ENCODE measurements at regions of chr10 and their contacts with region 1.

Region 1: DNA sequence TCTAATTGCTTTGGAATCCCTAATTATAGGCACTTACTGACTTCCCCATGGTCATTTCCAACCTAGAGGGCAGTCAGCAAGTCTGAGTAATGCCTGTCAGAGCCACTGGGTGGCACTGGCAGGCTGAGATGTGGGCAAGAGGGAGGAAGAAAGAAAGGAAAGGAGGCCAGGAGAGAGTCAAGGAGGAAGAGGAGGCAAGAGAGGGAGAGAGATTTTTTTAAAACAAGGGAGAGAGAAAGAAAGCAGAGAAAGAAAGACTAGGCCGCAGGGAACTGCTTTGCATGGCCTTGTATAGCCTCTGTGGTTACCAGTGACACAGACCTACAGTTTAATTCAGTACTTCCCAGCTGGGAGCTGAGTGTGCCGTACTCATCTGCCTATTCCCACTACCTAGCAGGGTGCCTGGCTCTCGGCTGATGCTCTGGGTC is 210.4 kb upstream of the ADO start:
- DNase-seq: peak; percentile 64
- H3K4me3 Mint-ChIP-seq: no peak overlapping the region
- H3K27ac Mint-ChIP-seq: no peak overlapping the region
- H3K4me1 Mint-ChIP-seq: no peaks in the 10 kb centered on the region
- H3K27me3 Mint-ChIP-seq: peaks cover 8% of the 10 kb centered on the region

Region 2: DNA sequence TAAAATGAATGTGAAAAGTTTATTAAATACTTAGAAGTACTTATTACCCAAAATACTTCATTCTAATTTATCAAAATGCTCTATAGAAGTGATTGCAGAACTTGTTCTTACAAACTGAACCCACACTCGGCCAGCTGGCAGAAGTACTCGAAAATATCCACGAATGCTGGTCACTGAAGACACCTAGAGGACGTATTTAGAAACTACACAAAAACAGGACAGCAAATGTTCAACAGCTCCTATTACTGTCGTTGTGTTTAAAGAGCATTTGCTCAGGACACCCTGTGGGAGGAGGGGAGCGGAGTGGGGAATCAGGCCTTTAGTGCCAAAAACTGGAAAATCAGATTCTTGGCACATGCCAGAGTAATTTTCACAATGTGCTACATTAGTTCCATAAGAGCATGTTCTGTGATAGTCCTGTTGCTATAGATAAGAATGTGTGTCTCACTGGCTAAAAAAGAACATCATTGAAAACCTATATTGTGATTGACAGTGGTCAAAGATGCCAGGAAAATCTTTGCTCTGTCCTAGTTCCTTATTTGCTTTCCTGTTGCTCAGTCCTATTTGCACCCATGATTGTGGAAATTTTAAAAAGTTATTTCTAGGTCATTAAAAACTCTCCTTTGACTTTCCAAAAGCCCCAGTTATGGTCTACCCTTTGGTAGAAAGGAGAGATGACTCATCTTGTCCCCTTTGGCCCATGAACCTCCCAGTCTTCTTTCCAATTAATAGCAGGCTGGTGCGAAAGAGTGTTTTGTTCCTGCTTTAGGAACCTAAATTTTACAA is 490.0 kb after region 1 on chr10:
- CTCF ChIA-PET with region 1: interaction called, 18 read pairs
- DNase-seq: peak; percentile 40
- H3K4me3 Mint-ChIP-seq: no peak overlapping the region
- H3K27ac Mint-ChIP-seq: no peak overlapping the region
- H3K4me1 Mint-ChIP-seq: no peaks in the 10 kb centered on the region
- H3K27me3 Mint-ChIP-seq: peaks cover 13% of the 10 kb centered on the region

Measured in activated naive CD4-positive, alpha-beta T cell treated with anti-CD3 and anti-CD28 coated beads, Interleukin-2, amount 10 ng/mL, durations not matched to agents 7 days and 5 days (primary cell).